Activated CD4-positive, alpha-beta memory T cell treated with anti-CD3 and anti-CD28 coated beads, Interleukin-2, amount 10 ng/mL, durations not matched to agents 7 days and 5 days (primary cell): ENCODE measurements at regions of chr7 and their contacts with region 1.

Region 1: GRCh38 chr7:100586266-100587025 is at the start of gene FBXO24:
- DNase-seq: peak; percentile 100
- H3K4me3 Mint-ChIP-seq: peak within 1 kb of the TSS; percentile 95
- H3K27ac Mint-ChIP-seq: peak within 1 kb of the TSS; percentile 97
- H3K4me1 Mint-ChIP-seq: peaks cover 30% of the 10 kb centered on the region
- H3K27me3 Mint-ChIP-seq: peaks cover 9% of the 10 kb centered on the region
- total RNA-seq, gene FBXO24: 1.8 to 2.7 TPM

Region 2: DNA sequence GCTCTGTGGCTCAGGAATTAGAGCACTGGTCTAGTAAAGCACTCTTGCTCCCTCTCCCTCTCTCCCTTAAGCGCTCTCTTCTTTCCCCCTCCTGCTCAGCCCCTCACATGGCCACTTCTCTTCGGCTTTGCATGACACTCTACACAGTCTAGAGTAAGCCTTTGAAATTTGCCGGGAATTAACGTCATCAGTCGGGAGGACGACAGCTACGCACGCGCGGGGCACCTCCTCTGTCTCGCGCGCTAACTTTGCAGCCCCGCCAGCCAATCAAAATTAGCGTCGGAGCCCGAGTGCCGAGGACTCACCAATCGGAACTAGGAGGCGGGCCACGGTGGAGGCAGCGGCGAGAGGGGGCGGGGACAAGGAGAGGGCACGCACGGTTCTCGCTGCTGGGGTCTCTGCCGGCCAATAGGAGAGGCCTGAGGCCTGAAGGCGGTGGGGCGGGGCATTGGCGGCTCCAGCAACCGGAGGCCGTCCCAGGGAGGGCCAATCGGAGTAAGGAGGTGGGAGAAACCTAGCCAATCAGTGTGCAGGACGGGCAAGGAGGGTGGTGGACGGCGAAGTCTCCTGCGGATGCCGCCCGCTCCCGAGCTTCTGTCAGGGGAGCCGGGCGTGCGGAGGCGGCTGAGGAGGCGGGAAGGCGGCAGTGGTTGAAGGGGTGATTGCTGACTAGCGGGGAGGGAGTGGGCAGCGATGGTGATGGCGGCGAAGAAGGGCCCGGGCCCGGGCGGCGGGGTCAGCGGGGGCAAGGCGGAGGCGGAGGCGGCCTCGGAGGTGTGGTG is 47.6 kb before region 1 on chr7 and contains the start of gene AGFG2:
- CTCF ChIA-PET with region 1: no interaction called
- POLR2A ChIA-PET with region 1: interaction called, 22 read pairs
- DNase-seq: peak; percentile 100
- H3K4me3 Mint-ChIP-seq: peak within 1 kb of the TSS; percentile 97
- H3K27ac Mint-ChIP-seq: peak within 1 kb of the TSS; percentile 87
- H3K4me1 Mint-ChIP-seq: peaks cover 49% of the 10 kb centered on the region
- H3K27me3 Mint-ChIP-seq: no peaks in the 10 kb centered on the region
- total RNA-seq, gene AGFG2: 53.9 to 59.8 TPM

Region 3: DNA sequence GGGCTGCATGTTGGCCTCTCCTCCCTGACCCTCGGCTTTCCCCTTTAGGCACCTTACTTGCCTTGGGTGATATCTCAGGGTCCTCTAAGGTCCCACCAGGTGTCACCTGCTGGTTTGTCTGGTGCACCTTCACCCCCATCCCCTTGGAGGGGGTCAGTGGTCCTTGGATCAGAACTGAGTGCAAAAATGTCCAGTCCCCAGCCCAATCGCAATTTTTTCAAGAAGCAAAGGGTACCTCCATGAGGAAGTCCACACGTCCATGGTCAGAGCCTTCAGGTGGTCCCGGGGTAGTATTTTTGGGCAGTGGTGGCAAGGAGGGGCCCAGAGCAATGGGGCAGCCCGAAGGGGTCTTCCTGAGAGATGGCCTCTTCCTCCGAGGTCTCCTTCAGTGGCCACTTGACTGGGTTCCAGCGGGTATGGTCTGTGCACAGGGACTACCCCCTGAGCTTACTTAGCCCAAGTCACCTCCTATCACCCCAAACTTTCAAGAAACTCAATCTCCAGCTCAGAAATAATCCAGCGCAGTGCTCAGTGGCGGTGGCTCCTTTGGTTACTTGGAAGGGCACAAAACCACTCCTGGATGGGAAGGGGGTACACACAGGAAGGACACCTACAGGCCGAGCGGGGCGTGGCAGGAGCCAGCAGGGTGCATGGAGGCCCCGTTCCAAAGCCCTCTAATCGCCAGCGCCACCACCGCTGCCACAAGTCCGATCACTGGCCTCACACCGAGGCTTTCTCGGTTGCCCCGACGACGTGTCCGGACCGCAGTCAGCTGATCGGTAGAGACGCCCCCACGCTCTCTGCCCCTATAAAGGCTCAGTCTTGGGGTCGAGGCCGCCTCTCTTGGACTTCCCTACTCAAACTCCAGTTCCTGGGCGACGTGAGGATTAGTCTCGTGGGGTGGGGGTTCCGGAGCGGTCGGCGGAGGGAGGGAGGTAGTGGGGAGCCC is 17.3 kb before region 1 on chr7:
- CTCF ChIA-PET with region 1: interaction called, 16 read pairs
- POLR2A ChIA-PET with region 1: interaction called, 23 read pairs
- DNase-seq: peak; percentile 54
- H3K4me3 Mint-ChIP-seq: peak overlapping the region; percentile 21
- H3K27ac Mint-ChIP-seq: peak overlapping the region; percentile 32
- H3K4me1 Mint-ChIP-seq: peaks cover 45% of the 10 kb centered on the region
- H3K27me3 Mint-ChIP-seq: no peaks in the 10 kb centered on the region

Region 4: GRCh38 chr7:100626530-100627237 is 40.2 kb after region 1 on chr7:
- CTCF ChIA-PET with region 1: interaction called, 5 read pairs
- POLR2A ChIA-PET with region 1: interaction called, 46 read pairs
- DNase-seq: peak; percentile 94
- H3K4me3 Mint-ChIP-seq: peak overlapping the region; percentile 76
- H3K27ac Mint-ChIP-seq: peak overlapping the region; percentile 86
- H3K4me1 Mint-ChIP-seq: peaks cover 74% of the 10 kb centered on the region
- H3K27me3 Mint-ChIP-seq: no peaks in the 10 kb centered on the region

Region 5: GRCh38 chr7:100691676-100692577 is 105.5 kb after region 1 on chr7:
- CTCF ChIA-PET with region 1: interaction called, 47 read pairs
- POLR2A ChIA-PET with region 1: interaction called, 31 read pairs
- DNase-seq: peak; percentile 84
- H3K4me3 Mint-ChIP-seq: peak overlapping the region; percentile 96
- H3K27ac Mint-ChIP-seq: peak overlapping the region; percentile 42
- H3K4me1 Mint-ChIP-seq: peaks cover 37% of the 10 kb centered on the region
- H3K27me3 Mint-ChIP-seq: peaks cover 10% of the 10 kb centered on the region

Region 6: DNA sequence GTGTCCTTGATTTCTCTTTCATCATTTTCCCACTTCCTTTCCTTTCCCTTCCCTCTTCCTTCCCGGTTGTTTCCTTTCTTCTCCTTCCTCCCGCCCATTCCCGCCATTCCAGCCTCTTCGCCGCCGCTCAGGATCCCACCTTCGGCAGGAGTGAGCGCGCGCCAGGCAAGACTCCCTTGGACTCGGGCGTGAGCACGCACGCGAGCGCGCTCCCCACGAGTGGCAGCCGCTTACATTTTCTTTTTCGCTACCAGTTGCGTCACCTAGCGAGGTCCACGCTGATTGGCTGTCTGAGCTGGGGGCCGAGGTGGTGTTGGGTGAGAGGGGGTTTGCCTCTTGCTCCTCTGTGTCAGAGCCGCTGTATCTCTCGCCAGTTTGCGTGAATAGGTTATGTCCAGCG is 158.7 kb after region 1 on chr7:
- CTCF ChIA-PET with region 1: no interaction called
- POLR2A ChIA-PET with region 1: no interaction called
- DNase-seq: peak; percentile 47
- H3K4me3 Mint-ChIP-seq: peak overlapping the region; percentile 70
- H3K27ac Mint-ChIP-seq: no peak overlapping the region
- H3K4me1 Mint-ChIP-seq: peaks cover 4% of the 10 kb centered on the region
- H3K27me3 Mint-ChIP-seq: peaks cover 8% of the 10 kb centered on the region